ENCODE measurements at regions of chr6 and their contacts with region 1.

Region 1: GRCh38 chr6:107318100-107318736 is 141.1 kb downstream of the PDSS2 start:
- DNase-seq: peak; percentile 69
- H3K4me3 ChIP-seq: no peak overlapping the region
- H3K27ac ChIP-seq: no peak overlapping the region
- H3K4me1 ChIP-seq: peaks cover 37% of the 10 kb centered on the region
- H3K27me3 ChIP-seq: no peaks in the 10 kb centered on the region
- CTCF ChIP-seq: peak; percentile 43 to 62
- POLR2A ChIP-seq: no peak

Region 2: GRCh38 chr6:107179004-107179403 is 139.2 kb before region 1 on chr6:
- CTCF ChIA-PET with region 1: interaction called, 10 read pairs
- POLR2A ChIA-PET with region 1: no interaction called
- dilution Hi-C with region 1: no loop called
- intact Hi-C with region 1: no loop called
- DNase-seq: peak; percentile 30
- H3K4me3 ChIP-seq: no peak overlapping the region
- H3K27ac ChIP-seq: no peak overlapping the region
- H3K4me1 ChIP-seq: no peaks in the 10 kb centered on the region
- H3K27me3 ChIP-seq: no peaks in the 10 kb centered on the region
- CTCF ChIP-seq: peak; percentile 10 to 25
- POLR2A ChIP-seq: no peak

Region 3: GRCh38 chr6:107353773-107354382 is 35.7 kb after region 1 on chr6:
- CTCF ChIA-PET with region 1: interaction called, 10 read pairs
- POLR2A ChIA-PET with region 1: no interaction called
- dilution Hi-C with region 1: no loop called
- intact Hi-C with region 1: no loop called
- DNase-seq: no peak
- H3K4me3 ChIP-seq: no peak overlapping the region
- H3K27ac ChIP-seq: no peak overlapping the region
- H3K4me1 ChIP-seq: no peaks in the 10 kb centered on the region
- H3K27me3 ChIP-seq: no peaks in the 10 kb centered on the region
- CTCF ChIP-seq: no peak
- POLR2A ChIP-seq: no peak

Region 4: DNA sequence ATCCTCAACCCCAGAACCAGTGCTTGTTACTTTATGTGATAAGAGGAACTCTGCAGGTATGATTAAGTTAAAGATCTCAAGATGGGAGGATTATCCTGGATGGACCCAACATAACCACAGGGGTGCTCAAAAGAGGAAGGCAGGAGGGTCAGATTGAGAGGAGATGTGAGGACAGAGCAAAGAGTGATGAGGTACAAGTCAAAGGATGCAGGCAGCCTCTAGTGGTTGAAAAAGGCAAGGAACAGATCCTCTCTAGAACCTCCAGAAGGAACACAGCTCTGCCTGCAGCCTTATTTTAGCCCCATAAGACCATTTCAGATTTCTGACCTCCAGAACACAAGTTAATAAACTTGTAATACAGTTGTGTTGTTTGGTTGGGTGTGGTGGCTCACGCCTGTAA is 99.9 kb after region 1 on chr6:
- CTCF ChIA-PET with region 1: interaction called, 15 read pairs
- POLR2A ChIA-PET with region 1: no interaction called
- dilution Hi-C with region 1: no loop called
- intact Hi-C with region 1: no loop called
- DNase-seq: no peak
- H3K4me3 ChIP-seq: no peak overlapping the region
- H3K27ac ChIP-seq: no peak overlapping the region
- H3K4me1 ChIP-seq: no peaks in the 10 kb centered on the region
- H3K27me3 ChIP-seq: no peaks in the 10 kb centered on the region
- CTCF ChIP-seq: peak; percentile 11 to 46
- POLR2A ChIP-seq: no peak

Region 5: GRCh38 chr6:107489636-107490565 is 171.7 kb after region 1 on chr6 and contains the start of gene SOBP:
- CTCF ChIA-PET with region 1: interaction called, 20 read pairs
- POLR2A ChIA-PET with region 1: no interaction called
- dilution Hi-C with region 1: no loop called
- intact Hi-C with region 1: loop called (anchors 1 kb)
- DNase-seq: peak; percentile 54
- H3K4me3 ChIP-seq: peak within 1 kb of the TSS; percentile 61 to 99 (median 88)
- H3K27ac ChIP-seq: peak within 1 kb of the TSS; percentile 59
- H3K4me1 ChIP-seq: peaks cover 50% of the 10 kb centered on the region
- H3K27me3 ChIP-seq: peaks cover 13 to 22% of the 10 kb centered on the region in 2 experiments
- CTCF ChIP-seq: peak; percentile 2 to 13
- POLR2A ChIP-seq: no peak
- total RNA-seq, gene SOBP: 6.1 and 6.6 TPM in 2 replicates

Region 6: DNA sequence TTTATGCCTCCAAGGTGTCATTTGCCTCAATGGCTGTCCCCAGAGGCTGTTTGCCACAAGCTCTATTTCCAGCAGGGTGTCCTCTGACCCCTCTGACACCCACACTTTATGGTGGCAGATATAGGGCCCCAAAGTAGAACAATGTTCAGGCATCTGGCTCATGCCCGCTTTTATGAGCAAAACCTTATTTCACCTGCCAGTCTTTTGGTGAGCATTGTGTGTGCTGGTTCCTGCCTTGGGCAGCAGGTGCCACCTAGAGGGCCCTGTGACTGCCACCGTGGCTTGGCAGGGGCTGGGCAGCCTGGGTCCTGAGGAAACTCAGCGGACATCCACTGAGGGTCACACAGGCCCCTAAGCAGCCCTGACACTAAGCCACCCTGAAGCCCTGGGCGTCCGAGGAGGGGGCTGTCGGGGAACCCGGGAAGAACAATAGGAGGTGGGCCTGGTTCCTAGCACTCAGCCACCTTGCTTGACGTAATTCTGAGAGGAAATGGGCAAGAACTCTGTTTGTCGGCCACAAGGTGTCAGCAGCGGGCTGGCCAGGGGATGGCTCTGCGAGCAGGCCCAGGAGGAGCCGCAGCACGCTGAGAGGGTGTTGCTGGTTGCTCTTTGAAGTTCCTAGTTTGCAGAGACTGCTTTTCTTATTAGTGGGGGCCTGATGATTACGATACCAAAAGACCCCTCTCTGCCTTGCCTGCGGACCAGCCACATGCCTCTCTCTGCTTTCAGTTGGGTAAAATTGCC is 356.9 kb after region 1 on chr6:
- CTCF ChIA-PET with region 1: interaction called, 12 read pairs
- POLR2A ChIA-PET with region 1: no interaction called
- dilution Hi-C with region 1: no loop called
- intact Hi-C with region 1: loop called (anchors 5 kb)
- DNase-seq: peak; percentile 81
- H3K4me3 ChIP-seq: no peak overlapping the region
- H3K27ac ChIP-seq: no peak overlapping the region
- H3K4me1 ChIP-seq: peaks cover 13% of the 10 kb centered on the region
- H3K27me3 ChIP-seq: peaks cover 8 to 14% of the 10 kb centered on the region in 2 experiments
- CTCF ChIP-seq: peak; percentile 83 to 87
- POLR2A ChIP-seq: no peak

Region 7: DNA sequence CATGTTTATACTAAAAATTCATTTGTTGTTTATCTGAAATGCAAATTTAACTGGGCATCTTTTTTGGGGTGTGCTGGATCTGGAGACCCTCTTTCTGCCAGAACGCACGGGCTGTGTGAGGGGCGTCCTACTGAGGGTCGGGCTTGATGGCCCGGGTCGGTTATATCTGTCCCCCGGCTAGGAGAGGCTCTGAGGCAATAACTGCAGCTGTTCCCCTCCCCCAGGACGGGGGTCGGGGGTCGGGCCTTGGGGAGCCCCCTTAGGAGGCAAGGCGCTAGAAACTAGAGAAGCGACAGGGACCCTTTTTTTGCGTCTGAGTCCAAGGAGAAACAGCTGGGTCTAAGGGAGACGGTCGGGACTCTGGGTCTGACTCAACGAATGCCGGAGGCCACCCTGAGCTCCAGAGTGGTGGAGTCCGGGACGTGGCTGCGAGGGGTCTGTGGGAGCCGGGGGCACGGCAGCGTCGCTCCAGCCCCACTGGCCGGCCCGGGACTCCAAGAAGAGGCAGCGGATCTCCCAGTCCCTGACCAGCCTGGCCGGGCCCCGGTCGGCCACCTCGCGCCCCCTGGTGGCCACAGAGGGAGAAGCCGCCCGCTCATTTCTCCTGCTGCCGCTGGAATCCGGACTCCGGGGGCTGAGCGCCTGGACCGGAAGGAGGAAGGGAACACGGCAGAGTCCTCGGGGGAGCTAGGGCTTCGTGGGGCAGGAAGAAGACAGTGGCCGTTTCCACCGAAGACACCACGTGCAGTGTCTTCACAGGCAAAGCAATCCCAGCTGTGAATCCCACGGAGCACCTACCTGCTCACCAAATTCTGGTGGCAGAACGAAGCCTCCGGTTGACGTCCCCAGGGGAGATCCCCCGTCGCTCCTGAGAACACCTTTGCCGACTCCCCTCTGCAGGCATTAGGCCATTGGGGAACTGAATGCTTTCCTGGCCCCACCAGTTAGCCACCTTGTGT is 529.9 kb after region 1 on chr6:
- CTCF ChIA-PET with region 1: interaction called, 18 read pairs
- POLR2A ChIA-PET with region 1: no interaction called
- dilution Hi-C with region 1: no loop called
- intact Hi-C with region 1: loop called (anchors 10 kb)
- DNase-seq: peak; percentile 75
- H3K4me3 ChIP-seq: peak overlapping the region in 2 of 3 experiments; percentile 33 to 37
- H3K27ac ChIP-seq: no peak overlapping the region
- H3K4me1 ChIP-seq: peaks cover 5% of the 10 kb centered on the region
- H3K27me3 ChIP-seq: peaks cover 8 to 23% of the 10 kb centered on the region in 2 experiments
- CTCF ChIP-seq: peak; percentile 97
- POLR2A ChIP-seq: no peak

Measured in endothelial cell of umbilical vein (primary cell).